ENCODE measurements at regions of chr17 and their contacts with region 1.

Region 1: DNA sequence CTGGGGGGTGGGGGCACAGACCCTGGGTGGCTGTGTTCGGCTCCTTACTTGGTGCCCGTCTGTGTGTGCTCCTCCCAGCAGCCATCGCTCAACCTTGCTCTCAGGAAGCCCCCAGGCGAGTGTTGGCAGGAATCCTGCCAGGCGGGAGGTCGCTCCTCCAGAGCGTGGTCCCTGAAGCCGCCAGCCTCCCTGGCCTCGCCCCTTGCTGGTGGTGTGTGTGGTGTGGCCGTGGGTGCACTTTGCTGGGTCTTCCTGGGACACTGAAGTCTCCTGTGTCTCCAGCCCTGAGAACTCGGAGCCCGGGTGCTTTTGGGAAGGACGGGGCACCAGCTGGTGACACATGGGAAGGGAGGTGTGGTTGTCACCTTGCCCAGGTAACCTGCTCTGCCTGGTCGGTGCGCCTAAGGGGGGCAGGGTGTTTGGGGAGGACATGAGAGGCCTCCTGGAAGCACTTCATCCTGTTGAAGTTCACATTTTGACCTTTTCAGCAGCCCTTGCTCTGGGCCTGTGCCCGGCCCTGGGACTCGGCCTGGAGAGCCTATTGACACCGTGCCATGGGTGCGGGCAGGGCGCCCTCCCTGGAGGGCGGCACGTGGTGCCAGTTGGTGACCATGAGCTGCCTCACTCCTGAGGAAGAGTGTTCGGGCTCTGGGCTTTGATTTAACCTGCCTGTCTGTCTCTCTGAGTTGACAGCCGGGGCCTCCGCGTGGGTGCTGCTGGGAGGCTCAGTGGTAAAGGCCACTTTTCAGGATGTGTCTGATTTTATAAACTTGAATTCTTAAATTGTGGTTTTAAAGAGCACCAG is 49.1 kb upstream of the ZNF750 start:
- DNase-seq: peak; percentile 72 to 77
- H3K4me3 ChIP-seq: peak overlapping the region; percentile 47
- H3K27ac ChIP-seq: peak overlapping the region; percentile 100
- H3K4me1 ChIP-seq: peaks cover 59% of the 10 kb centered on the region
- H3K27me3 ChIP-seq: no peaks in the 10 kb centered on the region
- CTCF ChIP-seq: no peak

Region 2: DNA sequence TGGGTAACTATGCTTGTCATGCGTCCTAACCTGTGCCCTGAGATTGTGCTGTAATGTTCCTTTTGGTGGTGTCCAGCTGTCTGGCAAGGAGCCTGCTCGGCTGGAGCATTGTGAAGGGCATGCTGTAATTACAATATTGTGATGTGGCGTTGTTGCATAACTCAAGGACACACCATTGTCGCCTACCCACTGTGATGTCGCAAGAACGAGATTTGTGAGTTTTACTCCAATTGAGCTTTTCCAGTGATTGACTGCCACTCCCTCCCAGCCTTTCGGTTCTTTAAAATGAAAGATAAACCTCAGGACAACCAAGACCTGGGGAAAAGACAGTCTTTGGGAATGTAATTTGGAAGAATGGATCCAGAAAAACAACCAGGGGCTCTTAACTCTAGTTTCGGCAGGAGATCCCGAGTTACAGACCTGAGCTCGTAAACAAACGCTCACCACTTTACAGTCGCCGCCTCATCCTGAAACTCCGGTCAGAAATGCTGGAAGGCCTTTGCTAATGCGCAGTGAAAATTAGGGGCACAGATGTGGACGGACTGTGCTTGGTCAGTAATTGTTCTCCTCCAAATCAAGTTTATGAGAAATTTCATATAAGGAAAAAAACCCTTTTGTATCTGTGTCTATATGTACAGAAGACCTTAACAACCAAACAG is 50.4 kb before region 1 on chr17:
- CTCF ChIA-PET with region 1: no interaction called
- POLR2A ChIA-PET with region 1: interaction called, 5 read pairs
- intact Hi-C with region 1: loop called (anchors 1 kb)
- DNase-seq: peak; percentile 76 to 90
- H3K4me3 ChIP-seq: peak overlapping the region; percentile 58
- H3K27ac ChIP-seq: peak overlapping the region; percentile 91
- H3K4me1 ChIP-seq: peaks cover 37% of the 10 kb centered on the region
- H3K27me3 ChIP-seq: no peaks in the 10 kb centered on the region
- CTCF ChIP-seq: no peak

Region 3: GRCh38 chr17:82876602-82877379 is 12.1 kb before region 1 on chr17:
- CTCF ChIA-PET with region 1: interaction called, 4 read pairs
- POLR2A ChIA-PET with region 1: interaction called, 4 read pairs
- intact Hi-C with region 1: loop called (anchors 1 kb)
- DNase-seq: peak; percentile 68 to 70
- H3K4me3 ChIP-seq: peak overlapping the region; percentile 54; the same call in 1 of the 2 replicates
- H3K27ac ChIP-seq: peak overlapping the region; percentile 100
- H3K4me1 ChIP-seq: peaks cover 42% of the 10 kb centered on the region
- H3K27me3 ChIP-seq: no peaks in the 10 kb centered on the region
- CTCF ChIP-seq: no peak; the same call in 1 of the 2 replicates

Measured in PC-9 (cell line).